H1 (cell line): ENCODE measurements at regions of chr19 and their contacts with region 1.

Region 1: DNA sequence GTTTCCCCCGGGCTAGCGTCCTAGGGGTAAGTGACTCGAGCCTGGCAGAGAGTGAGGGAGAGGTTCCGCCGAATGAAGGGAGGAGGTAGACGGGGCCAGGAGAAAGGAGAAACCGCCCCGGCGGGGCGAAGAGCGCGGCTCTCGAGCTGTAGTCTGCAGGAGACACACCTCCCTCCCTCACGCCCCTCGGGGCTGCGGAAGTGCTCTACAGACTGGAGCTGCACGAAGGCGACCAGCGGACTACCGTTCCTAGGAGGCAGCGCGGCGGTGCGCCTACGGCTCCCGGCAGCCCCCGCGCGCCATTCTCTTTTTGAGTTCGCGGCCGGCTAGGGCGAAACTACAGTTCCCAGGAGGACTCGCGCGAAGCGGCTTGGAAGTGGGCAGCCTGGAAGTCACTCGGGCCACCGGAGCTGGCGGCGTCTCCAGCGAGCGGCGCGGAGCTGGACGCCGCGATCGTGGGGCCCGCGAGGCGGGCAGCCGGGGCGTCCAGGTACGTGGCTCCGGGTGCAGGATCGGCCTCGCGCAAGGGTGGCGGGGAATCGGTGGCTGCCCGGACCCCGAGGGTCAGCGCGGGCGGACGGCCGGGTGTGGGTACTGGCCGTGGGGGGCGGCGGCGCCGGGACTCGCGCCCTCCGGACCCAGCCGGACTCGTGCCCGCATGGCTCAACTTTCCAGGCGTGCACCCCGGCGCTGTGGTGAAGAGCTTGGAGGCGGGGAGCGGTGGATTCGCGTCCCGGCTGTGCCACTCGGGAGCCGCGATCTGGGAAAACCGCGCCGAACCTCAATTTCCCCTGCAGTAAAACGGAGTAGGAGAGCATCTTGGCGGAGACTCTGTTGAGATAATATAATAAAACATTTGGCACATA is at the start of gene SIPA1L3:
- DNase-seq: peak; percentile 91 to 96
- H3K4me3 ChIP-seq: peak within 1 kb of the TSS; percentile 72 to 92 (median 84)
- H3K27ac ChIP-seq: peak within 1 kb of the TSS; percentile 93
- H3K4me1 ChIP-seq: peaks cover 0 to 21% (median 9%) of the 10 kb centered on the region in 4 experiments; a peak in 6 of 7 replicates
- H3K27me3 ChIP-seq: no peaks in the 10 kb centered on the region
- CTCF ChIP-seq: no peak
- EP300 ChIP-seq: no peak
- POLR2A ChIP-seq: peak in 1 of 2 experiments; percentile 62; a peak in 1 of 3 replicates
- RAD21 ChIP-seq: no peak
- total RNA-seq, gene SIPA1L3: 43.0 and 54.9 TPM in 2 replicates

Region 2: DNA sequence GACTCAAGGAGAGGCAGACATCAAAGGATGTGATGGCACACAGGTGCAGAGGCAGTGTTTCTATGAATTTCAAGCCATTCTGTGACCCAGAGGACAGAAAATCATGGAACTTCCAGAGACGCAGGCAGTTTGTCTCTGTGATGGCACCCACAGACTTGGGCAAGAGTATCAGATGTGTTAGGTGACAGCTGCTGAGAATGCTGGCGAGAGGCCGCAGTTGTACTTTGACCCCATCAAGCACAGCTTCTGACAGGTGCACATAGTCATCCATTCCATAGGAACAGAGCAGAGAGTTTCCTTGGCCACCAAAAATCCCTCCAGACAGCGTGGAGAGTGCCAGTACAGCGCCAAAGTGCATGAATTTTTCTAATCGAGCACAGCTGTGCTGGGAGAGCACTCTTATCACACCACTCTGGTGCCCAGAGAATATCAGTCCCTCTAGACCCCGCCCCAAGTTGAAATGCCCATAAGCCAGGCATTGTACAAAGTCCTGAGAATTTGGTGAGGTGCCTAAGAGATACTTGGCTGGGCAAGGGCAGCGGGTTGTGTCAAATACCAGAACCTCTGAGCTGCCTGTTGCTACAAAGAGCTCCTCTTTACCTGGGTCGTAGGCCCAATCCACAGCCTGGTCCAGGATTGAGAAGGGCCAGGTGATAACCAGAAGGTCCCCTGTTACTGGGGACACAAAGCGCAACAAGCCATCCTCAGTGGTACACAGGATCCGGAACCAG is 13.1 kb before region 1 on chr19:
- CTCF ChIA-PET with region 1: interaction called, 5 read pairs
- POLR2A ChIA-PET with region 1: interaction called, 14 read pairs
- DNase-seq: no peak
- H3K4me3 ChIP-seq: no peak overlapping the region
- H3K27ac ChIP-seq: no peak overlapping the region
- H3K4me1 ChIP-seq: no peaks in the 10 kb centered on the region
- H3K27me3 ChIP-seq: peaks cover 0 to under 1% (median 0%) of the 10 kb centered on the region in 4 experiments; a peak in 1 of 7 replicates
- CTCF ChIP-seq: no peak
- EP300 ChIP-seq: no peak
- POLR2A ChIP-seq: no peak
- RAD21 ChIP-seq: no peak

Region 3: DNA sequence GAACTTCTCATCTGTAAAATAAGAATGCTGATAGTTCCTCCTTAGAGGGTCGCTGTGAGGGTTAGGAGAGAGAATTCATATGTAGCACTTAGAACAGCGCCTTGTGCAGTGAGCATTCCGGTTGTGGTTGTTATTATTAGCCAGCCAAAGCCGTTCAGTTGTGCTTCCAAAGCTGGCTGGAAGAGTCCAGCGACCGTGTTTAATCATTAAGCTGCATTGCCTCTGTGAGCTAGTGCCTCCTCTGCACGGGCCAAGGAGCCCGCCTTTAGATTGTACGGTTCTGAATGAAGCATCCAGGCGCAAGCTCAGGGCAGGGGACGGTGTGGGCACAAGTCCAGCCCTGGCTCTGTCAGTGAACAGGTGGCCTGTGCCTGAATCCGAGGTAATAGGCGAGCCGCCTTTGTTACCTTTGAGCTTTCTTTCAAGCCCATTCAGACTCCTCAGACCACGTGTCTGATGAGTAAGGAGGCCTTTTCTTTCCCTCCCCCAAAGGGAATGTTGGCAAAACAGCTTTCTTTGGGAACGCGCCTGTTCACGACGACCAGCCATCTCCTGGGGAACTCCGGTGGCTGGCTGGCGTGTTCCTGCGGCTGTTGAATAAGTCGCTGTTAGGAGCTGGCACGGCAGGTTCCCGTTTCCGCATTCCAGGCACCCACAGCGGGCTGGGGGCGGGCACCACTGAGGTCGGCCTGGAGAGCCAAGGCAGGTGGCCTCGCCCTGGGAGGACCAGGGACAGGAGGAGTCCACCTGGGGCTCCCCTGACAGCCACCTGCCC is 25.0 kb after region 1 on chr19:
- CTCF ChIA-PET with region 1: interaction called, 12 read pairs
- POLR2A ChIA-PET with region 1: interaction called, 27 read pairs
- DNase-seq: peak; percentile 70 to 78
- H3K4me3 ChIP-seq: peak overlapping the region; percentile 21 to 52 (median 28); a peak in 7 of 8 replicates
- H3K27ac ChIP-seq: peak overlapping the region; percentile 91
- H3K4me1 ChIP-seq: peaks cover 25 to 39% (median 33%) of the 10 kb centered on the region in 4 experiments
- H3K27me3 ChIP-seq: no peaks in the 10 kb centered on the region
- CTCF ChIP-seq: no peak
- EP300 ChIP-seq: peak in 1 of 2 experiments; percentile 32; a peak in 1 of 3 replicates
- POLR2A ChIP-seq: 0 out of 3 replicates have a peak, but pooled peaks of 1 of the 2 experiments have one; percentile 51
- RAD21 ChIP-seq: peak in 1 of 2 experiments; percentile 16; a peak in 1 of 4 replicates

Region 4: DNA sequence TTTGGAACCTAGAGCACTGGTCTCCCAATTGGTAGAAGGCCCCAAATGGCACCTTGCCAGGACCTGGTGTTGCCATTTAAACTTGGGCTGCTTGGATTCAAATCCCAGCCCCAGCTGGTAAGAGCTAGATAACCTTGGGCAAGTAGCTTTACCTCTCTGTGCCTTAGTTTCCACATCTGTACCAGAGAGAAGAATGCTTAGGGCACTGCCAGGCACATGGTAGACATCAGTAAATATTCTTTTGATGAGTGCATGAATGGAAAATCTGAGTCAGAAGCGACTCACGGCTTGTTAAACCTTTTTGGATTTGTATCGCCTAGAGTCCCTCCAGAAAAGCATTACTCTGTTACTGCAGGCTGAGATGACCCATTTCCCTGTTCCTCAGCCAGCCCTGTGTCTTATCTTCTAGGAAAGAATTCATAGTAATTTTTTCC is 90.8 kb after region 1 on chr19:
- CTCF ChIA-PET with region 1: interaction called, 259 read pairs
- POLR2A ChIA-PET with region 1: interaction called, 50 read pairs
- DNase-seq: no peak
- H3K4me3 ChIP-seq: no peak overlapping the region
- H3K27ac ChIP-seq: no peak overlapping the region
- H3K4me1 ChIP-seq: peaks cover 0 to 2% (median under 1%) of the 10 kb centered on the region in 4 experiments; a peak in 3 of 7 replicates
- H3K27me3 ChIP-seq: no peaks in the 10 kb centered on the region
- CTCF ChIP-seq: no peak
- EP300 ChIP-seq: no peak
- POLR2A ChIP-seq: no peak
- RAD21 ChIP-seq: no peak

Region 5: GRCh38 chr19:38022791-38023670 is 115.9 kb after region 1 on chr19:
- CTCF ChIA-PET with region 1: interaction called, 7 read pairs
- POLR2A ChIA-PET with region 1: interaction called, 11 read pairs
- DNase-seq: no peak
- H3K4me3 ChIP-seq: no peak overlapping the region
- H3K27ac ChIP-seq: no peak overlapping the region
- H3K4me1 ChIP-seq: peaks cover 0 to 13% (median 6%) of the 10 kb centered on the region in 4 experiments; a peak in 5 of 7 replicates
- H3K27me3 ChIP-seq: no peaks in the 10 kb centered on the region
- CTCF ChIP-seq: no peak
- EP300 ChIP-seq: no peak
- POLR2A ChIP-seq: no peak
- RAD21 ChIP-seq: no peak

Region 6: GRCh38 chr19:38081547-38082255 is 174.6 kb after region 1 on chr19:
- CTCF ChIA-PET with region 1: interaction called, 57 read pairs
- POLR2A ChIA-PET with region 1: interaction called, 5 read pairs
- DNase-seq: no peak
- H3K4me3 ChIP-seq: no peak overlapping the region
- H3K27ac ChIP-seq: no peak overlapping the region; the same call in 1 of the 2 replicates
- H3K4me1 ChIP-seq: peaks cover 0 to 8% (median 4%) of the 10 kb centered on the region in 4 experiments; a peak in 5 of 7 replicates
- H3K27me3 ChIP-seq: no peaks in the 10 kb centered on the region
- CTCF ChIP-seq: no peak
- EP300 ChIP-seq: no peak
- POLR2A ChIP-seq: no peak
- RAD21 ChIP-seq: no peak

Region 7: DNA sequence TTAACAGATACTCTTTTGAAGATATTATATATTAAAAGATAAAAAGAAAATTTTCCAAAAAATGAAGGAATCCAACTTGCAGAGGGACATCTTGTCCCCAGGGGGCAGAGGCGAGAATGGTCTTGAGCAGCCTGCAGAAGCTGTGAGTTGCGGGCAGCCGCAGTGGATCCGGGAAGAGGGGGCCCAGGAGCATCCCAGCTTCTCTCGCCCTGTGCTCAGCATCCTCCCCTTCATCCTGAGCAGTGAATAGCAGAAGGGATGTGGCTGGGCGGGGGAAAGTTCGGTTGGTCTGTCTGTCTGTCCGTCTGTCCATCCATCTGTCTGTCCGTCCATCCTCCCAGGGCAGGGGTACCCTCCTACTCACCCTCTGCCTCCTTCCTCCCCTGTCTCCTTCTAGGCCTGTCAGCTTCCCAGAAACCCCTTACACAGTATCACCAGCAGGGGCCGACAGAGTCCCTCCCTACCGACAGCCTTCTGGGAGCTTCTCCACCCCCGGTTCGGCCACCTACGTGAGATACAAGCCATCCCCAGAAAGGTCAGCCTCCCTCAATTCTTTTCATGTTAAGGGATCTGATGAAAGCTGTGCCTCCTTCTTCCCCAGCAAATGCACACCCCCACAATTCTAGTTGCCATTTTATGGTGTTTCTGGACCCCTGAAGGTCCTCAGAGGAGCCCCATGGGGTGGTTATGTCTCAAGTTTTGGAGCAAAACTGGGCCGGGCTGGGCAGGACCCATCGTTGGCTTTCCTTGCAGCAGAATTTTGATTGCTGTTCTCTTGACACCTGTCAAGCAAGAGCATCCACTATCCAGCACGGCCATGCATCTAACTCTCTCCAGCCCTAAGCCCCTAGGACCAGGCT is 235.3 kb after region 1 on chr19:
- CTCF ChIA-PET with region 1: interaction called, 66 read pairs
- POLR2A ChIA-PET with region 1: interaction called, 4 read pairs
- DNase-seq: peak; percentile 41 to 85
- H3K4me3 ChIP-seq: no peak overlapping the region
- H3K27ac ChIP-seq: no peak overlapping the region
- H3K4me1 ChIP-seq: no peaks in the 10 kb centered on the region; a peak in 1 of 7 replicates
- H3K27me3 ChIP-seq: no peaks in the 10 kb centered on the region
- CTCF ChIP-seq: peak; percentile 88 to 95 (median 92)
- EP300 ChIP-seq: no peak
- POLR2A ChIP-seq: no peak
- RAD21 ChIP-seq: peak; percentile 89 to 94